ENCODE measurements at regions of chr7 and their contacts with region 1.

Region 1: GRCh38 chr7:155412537-155413253 is 45.2 kb upstream of the EN2 start:
- DNase-seq: peak in 1 of 2 experiments; percentile 87
- H3K4me3 ChIP-seq: no peak overlapping the region
- H3K27ac ChIP-seq: no peak overlapping the region
- H3K4me1 ChIP-seq: peaks cover 0 to 11% (median 5%) of the 10 kb centered on the region in 4 experiments; a peak in 6 of 7 replicates
- H3K27me3 ChIP-seq: peaks cover 0 to 4% (median 1%) of the 10 kb centered on the region in 4 experiments; a peak in 4 of 7 replicates
- CTCF ChIP-seq: peak in 2 of 3 experiments; percentile 80 to 88; a peak in 3 of 4 replicates
- EP300 ChIP-seq: no peak
- POLR2A ChIP-seq: no peak
- RAD21 ChIP-seq: peak; percentile 57 to 64

Region 2: DNA sequence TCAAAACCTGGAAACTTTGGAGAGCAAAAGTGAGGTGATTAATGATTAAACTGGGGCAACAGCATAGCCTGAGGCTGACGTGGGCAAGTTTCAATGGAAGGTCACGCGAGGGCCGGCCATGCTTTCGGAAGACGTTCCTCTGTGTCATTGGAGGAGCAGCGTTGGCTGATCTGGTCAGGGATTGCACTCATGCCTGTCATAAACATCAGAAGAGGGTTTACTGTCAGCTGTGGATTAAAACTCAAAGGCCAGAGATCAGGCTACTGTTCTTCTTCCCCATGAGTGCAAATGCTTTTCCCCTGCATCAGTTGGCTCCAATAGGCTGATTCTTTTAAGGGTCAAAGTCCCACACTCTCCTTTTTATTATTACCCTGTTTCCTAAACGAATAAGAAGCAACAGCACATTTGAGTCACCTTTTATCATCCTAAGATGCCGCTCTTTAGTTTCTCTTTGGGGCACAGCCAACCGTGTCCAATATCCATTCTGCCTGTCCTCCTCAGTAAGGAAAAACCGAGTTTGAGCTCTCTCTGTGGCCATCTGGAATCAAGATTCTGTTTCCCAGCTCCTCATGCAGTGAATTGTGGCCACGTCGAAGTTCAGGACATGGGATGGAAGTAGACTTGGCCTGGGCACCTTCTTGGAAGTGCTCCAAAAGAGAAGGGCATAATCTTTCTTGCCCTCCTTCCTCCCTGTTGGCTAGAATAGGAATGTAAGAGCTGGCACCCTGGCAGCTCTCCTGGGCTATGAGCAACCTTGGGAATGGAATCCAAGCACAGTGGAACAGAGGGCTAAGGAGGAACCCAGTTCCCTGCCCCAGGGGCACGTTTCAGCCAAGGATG is 177.5 kb before region 1 on chr7:
- CTCF ChIA-PET with region 1: no interaction called
- POLR2A ChIA-PET with region 1: no interaction called
- DNase-seq: no peak
- H3K4me3 ChIP-seq: no peak overlapping the region
- H3K27ac ChIP-seq: no peak overlapping the region
- H3K4me1 ChIP-seq: peaks cover 0 to 3% (median 0%) of the 10 kb centered on the region in 4 experiments; a peak in 1 of 7 replicates
- H3K27me3 ChIP-seq: no peaks in the 10 kb centered on the region
- CTCF ChIP-seq: no peak
- EP300 ChIP-seq: no peak
- POLR2A ChIP-seq: no peak
- RAD21 ChIP-seq: no peak

Region 3: DNA sequence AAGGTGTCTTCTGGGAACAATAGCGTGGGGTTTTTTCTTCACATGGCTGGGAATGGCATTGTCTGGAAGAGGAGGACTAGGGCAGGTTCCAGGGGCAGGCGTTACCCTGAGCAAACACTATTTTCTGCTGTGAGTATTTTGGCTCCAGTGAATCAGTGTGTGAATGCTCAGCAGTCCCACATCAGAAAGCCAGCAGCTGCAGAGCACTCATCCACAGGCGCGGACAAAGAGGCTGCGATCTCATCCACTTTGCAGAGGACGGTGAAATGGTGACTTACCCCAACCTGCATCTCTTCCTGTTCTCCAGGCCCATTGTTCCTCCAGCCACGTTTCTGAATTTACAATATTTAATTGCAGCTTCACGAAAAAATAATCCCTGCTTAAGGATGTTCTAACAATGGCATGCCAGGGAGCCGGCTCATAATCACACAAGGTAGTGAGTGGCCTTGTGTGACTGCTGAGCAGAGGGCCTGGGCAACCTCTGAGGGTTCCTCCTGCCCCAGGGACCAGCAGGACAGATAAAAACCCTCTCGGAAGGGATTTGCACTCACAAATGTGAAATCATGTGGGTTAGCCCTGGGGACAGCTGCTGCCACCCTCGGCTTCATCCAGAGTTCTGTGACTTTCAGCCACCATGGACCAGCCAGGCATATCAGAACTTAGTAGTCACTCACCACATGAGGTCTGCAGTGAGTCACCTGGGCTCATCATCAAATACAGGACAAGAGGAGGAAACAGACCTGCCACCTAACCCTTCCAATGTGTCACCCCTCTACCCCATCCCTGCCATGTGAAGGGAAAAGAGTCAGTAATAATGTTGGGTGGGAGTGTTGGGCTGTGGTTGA is 19.7 kb before region 1 on chr7:
- CTCF ChIA-PET with region 1: interaction called, 14 read pairs
- POLR2A ChIA-PET with region 1: no interaction called
- DNase-seq: no peak
- H3K4me3 ChIP-seq: no peak overlapping the region
- H3K27ac ChIP-seq: no peak overlapping the region
- H3K4me1 ChIP-seq: no peaks in the 10 kb centered on the region
- H3K27me3 ChIP-seq: no peaks in the 10 kb centered on the region; a peak in 2 of 7 replicates
- CTCF ChIP-seq: no peak
- EP300 ChIP-seq: no peak
- POLR2A ChIP-seq: no peak
- RAD21 ChIP-seq: no peak

Region 4: GRCh38 chr7:155422599-155423336 is 10.1 kb after region 1 on chr7:
- CTCF ChIA-PET with region 1: interaction called, 18 read pairs
- POLR2A ChIA-PET with region 1: no interaction called
- DNase-seq: no peak
- H3K4me3 ChIP-seq: no peak overlapping the region
- H3K27ac ChIP-seq: no peak overlapping the region
- H3K4me1 ChIP-seq: no peaks in the 10 kb centered on the region; a peak in 1 of 7 replicates
- H3K27me3 ChIP-seq: no peaks in the 10 kb centered on the region; a peak in 3 of 7 replicates
- CTCF ChIP-seq: no peak
- EP300 ChIP-seq: no peak
- POLR2A ChIP-seq: no peak
- RAD21 ChIP-seq: no peak